PC-3 (cell line): ENCODE measurements at regions of chr4 and their contacts with region 1.

Region 1: DNA sequence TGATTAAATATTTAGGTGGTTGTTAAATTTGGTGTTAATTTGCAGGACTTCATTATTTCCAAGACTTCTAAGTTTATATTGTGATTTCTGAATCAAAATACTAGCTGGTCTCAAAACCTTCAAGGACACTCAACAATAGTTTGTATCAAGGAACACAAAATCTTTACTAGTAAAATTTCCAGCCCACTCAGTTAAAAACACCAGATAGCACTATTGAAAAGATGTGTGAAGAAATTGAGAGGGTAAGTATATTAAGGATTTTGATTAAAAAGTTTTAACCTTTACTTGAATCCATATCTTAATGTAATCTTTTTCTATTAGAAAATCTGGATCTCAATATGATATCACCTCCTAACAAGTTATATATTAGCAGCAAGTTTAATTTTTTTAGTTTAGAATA is 89.3 kb upstream of the UGT8 start:
- DNase-seq: no peak
- ATAC-seq: no peak
- H3K4me3 ChIP-seq: no peak overlapping the region
- H3K27ac ChIP-seq: no peak overlapping the region
- H3K4me1 ChIP-seq: peaks cover 24% of the 10 kb centered on the region
- H3K27me3 ChIP-seq: no peaks in the 10 kb centered on the region
- CTCF ChIP-seq: no peak; the same call in 1 of the 2 replicates

Region 2: GRCh38 chr4:114400531-114400930 is 108.8 kb before region 1 on chr4:
- CTCF ChIA-PET with region 1: no interaction called
- POLR2A ChIA-PET with region 1: no interaction called
- intact Hi-C with region 1: loop called (anchors 5 kb)
- DNase-seq: peak; percentile 46
- ATAC-seq: peak; percentile 87
- H3K4me3 ChIP-seq: no peak overlapping the region
- H3K27ac ChIP-seq: no peak overlapping the region
- H3K4me1 ChIP-seq: 0 out of 2 replicates have a peak, but pooled peaks cover 4% of the 10 kb centered on the region
- H3K27me3 ChIP-seq: no peaks in the 10 kb centered on the region
- CTCF ChIP-seq: no peak

Region 3: DNA sequence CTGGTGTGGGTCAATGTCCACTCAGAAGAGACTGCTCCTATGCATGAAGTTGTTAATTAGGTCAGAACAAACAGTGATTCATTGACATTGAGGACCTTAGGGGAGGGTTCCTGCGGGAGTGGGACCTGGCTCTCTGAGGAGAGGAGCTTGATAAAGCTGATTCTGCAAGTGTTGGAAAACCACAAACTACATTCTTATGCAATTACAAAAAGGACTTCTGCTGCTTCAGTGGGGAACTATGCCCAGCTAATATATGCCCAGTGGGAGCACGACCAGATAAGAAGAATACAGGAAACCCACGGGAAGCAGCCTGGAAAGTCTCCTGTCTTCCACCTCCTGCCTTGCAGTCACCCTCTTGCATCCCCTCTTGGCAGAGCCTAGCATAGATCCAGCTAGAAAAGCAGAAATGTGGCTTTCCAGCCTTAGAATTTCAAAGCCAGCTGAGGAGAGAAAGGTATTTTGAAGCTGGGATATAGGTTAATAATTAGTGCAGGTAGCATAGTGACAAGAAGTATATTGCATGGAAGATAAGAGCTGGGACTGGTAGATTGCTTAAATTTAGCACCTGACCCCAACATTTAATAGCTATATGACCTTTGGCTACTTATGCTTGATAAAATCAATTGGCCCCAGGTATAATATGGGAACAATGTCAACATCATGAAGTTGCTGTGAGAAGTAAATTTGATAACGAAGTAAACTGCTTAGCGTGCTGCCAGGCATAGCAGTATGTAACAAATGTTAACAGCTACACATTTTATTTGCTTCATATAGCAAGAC is 54.4 kb after region 1 on chr4:
- CTCF ChIA-PET with region 1: no interaction called
- POLR2A ChIA-PET with region 1: no interaction called
- intact Hi-C with region 1: loop called (anchors 2 kb)
- DNase-seq: peak; percentile 20
- ATAC-seq: peak; percentile 96
- H3K4me3 ChIP-seq: no peak overlapping the region
- H3K27ac ChIP-seq: no peak overlapping the region
- H3K4me1 ChIP-seq: no peaks in the 10 kb centered on the region
- H3K27me3 ChIP-seq: no peaks in the 10 kb centered on the region
- CTCF ChIP-seq: no peak

Region 4: GRCh38 chr4:114606250-114606649 is 96.9 kb after region 1 on chr4:
- CTCF ChIA-PET with region 1: no interaction called
- POLR2A ChIA-PET with region 1: no interaction called
- intact Hi-C with region 1: loop called (anchors 5 kb)
- DNase-seq: peak; percentile 51
- ATAC-seq: peak; percentile 79
- H3K4me3 ChIP-seq: no peak overlapping the region
- H3K27ac ChIP-seq: no peak overlapping the region
- H3K4me1 ChIP-seq: peaks cover 11% of the 10 kb centered on the region; the same call in 1 of the 2 replicates
- H3K27me3 ChIP-seq: no peaks in the 10 kb centered on the region
- CTCF ChIP-seq: no peak

Region 5: GRCh38 chr4:114642173-114642780 is 132.9 kb after region 1 on chr4:
- CTCF ChIA-PET with region 1: no interaction called
- POLR2A ChIA-PET with region 1: interaction called, 11 read pairs
- intact Hi-C with region 1: no loop called
- DNase-seq: no peak
- ATAC-seq: no peak
- H3K4me3 ChIP-seq: no peak overlapping the region
- H3K27ac ChIP-seq: no peak overlapping the region
- H3K4me1 ChIP-seq: no peaks in the 10 kb centered on the region
- H3K27me3 ChIP-seq: no peaks in the 10 kb centered on the region
- CTCF ChIP-seq: no peak

Region 6: GRCh38 chr4:114694770-114695169 is 185.4 kb after region 1 on chr4:
- CTCF ChIA-PET with region 1: no interaction called
- POLR2A ChIA-PET with region 1: no interaction called
- intact Hi-C with region 1: loop called (anchors 1 kb)
- DNase-seq: peak; percentile 59
- ATAC-seq: no peak
- H3K4me3 ChIP-seq: no peak overlapping the region
- H3K27ac ChIP-seq: no peak overlapping the region
- H3K4me1 ChIP-seq: no peaks in the 10 kb centered on the region
- H3K27me3 ChIP-seq: no peaks in the 10 kb centered on the region
- CTCF ChIP-seq: peak; percentile 64